Left ventricle myocardium superior (tissue), 1 donor: ENCODE measurements at regions of chr11 and their contacts with region 1.

Region 1: DNA sequence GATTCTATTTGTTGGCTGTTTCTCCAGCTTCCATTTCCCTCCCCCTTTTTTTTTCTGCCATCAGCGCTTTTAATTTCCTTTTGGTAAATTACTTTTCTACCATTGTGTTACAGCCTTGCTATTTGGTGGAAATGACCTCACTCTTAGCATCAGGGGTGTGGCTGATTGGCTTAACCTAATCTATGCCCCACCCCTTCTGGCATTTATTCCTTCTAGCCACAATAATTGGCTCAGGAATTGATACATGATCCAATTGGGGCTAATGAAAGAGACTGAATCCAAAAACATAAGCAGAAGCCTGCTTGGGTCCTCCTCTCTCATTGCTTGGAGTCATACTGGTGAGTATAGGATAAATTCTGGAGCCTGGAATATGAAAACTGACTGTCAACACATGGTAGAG is 402.4 kb upstream of the LRRC4C start:
- DNase-seq: no peak
- ATAC-seq: no peak

Region 2: DNA sequence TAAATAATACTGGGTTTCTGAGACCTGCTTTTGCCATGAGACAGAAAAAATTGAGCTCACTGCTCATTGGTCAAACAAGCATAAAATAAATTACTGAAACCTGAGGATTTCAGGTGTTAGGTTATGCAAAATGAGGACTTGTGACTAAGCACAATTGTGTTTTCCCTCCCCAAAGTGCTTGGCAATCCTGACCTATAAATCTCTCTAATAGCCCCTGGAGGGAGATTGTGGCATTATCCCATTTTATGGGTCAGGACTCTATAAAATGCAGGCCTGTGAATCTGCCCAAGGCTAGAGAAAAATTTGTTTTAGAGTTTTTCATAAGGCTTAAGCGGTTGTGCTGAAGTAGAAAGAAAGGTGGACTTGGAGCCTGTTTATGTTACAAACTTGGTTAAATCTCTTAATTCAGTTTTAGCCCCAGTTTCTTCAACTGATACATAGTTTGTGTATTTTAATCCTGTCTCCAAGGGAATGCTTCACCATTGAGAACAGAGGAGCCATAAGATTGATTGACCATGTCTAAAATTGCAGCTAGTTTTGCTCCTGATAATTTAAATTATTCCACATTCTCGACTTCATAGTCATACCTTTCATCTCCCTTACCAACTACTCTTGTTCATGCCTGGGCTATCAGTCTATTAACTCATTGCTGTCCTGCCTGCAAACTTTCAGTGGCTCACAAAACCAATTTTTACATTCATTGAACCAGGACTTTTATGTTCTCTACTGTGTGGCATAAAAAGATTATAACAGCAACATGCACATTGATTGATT is 338.8 kb before region 1 on chr11:
- intact Hi-C with region 1: no loop called
- DNase-seq: no peak
- ATAC-seq: no peak

Region 3: DNA sequence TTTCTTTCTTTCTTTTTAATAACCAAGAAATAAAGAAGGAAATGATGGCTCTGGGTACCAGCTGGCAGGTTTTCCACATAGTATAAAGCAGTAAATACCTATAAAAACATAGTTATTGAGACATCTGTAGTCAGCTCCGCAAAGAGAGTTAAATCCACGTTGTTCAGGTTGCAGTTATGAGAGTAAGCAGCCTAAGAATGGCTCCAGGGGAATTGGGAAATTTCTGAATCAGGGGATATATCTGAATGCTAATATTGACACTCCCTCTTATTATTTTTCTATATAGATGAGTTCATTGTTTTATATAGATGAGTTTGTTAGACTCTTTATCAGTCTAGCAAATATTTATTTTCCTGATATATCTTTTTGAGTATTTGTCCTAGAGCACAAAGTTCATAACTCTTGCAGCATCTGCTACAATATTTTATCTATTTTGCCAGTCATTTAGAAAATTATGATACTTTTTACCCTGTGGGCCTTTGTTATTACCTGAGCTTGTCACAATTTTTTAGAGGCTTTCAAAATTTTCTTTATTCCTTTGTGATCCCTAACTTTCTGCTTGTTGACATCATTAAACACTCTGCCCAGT is 80.3 kb before region 1 on chr11:
- intact Hi-C with region 1: loop called (anchors 2 kb)
- DNase-seq: no peak
- ATAC-seq: no peak

Region 4: GRCh38 chr11:41895081-41895480 is 33.2 kb after region 1 on chr11:
- intact Hi-C with region 1: no loop called
- DNase-seq: no peak
- ATAC-seq: no peak